Heart left ventricle (tissue), 16 donors: ENCODE measurements at regions of chr12 and their contacts with region 1.

Region 1: GRCh38 chr12:116703214-116703795 is 34.6 kb downstream of the SPRING1 start:
- DNase-seq: peak; percentile 54 to 74 (median 66)
- ATAC-seq: peak; percentile 67 to 83 (median 76)
- H3K4me3 ChIP-seq: no peak overlapping the region
- H3K27ac ChIP-seq: no peak overlapping the region
- H3K4me1 ChIP-seq: peaks cover 0 to 6% (median 0%) of the 10 kb centered on the region in 12 donors
- H3K27me3 ChIP-seq: no peaks in the 10 kb centered on the region
- CTCF ChIP-seq: peak; percentile 89 to 97 (median 93)
- POLR2A ChIP-seq: no peak

Region 2: GRCh38 chr12:114762490-114763110 is 1940.7 kb before region 1 on chr12:
- intact Hi-C with region 1: no loop called
- DNase-seq: peak in 4 of 5 donors; percentile 7 to 47 (median 36)
- ATAC-seq: peak; percentile 64 to 94 (median 83)
- H3K4me3 ChIP-seq: peak overlapping the region in 1 of 12 donors; percentile 18
- H3K27ac ChIP-seq: peak overlapping the region in 3 of 12 donors; percentile 0 to 56 (median 46)
- H3K4me1 ChIP-seq: peaks cover 0 to 12% (median 0%) of the 10 kb centered on the region in 12 donors
- H3K27me3 ChIP-seq: no peaks in the 10 kb centered on the region
- CTCF ChIP-seq: no peak
- POLR2A ChIP-seq: no peak

Region 3: DNA sequence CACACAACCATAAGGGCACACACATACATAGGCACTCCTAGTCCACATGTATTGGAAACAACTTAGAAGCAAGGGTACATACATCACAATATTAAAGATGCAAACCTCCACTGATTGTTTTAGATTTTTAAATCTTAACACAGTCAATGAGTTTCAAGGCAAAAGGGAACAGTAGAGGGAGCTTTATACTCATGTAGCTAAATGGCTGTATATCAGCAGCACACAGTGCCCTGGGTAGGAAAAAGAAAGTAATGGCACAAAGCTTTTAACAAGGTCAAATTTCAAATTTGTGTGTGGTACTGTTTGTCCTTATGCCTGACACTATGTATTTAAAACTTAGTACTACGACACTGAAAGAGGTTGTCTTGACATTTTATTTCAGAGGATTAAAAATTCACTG is 687.8 kb before region 1 on chr12:
- intact Hi-C with region 1: loop called in 3 of 10 experiments (anchors 10 kb)
- DNase-seq: no peak
- ATAC-seq: peak; percentile 62 to 86 (median 78)
- H3K4me3 ChIP-seq: no peak overlapping the region
- H3K27ac ChIP-seq: no peak overlapping the region
- H3K4me1 ChIP-seq: peaks cover 0 to 16% (median 10%) of the 10 kb centered on the region in 12 donors
- H3K27me3 ChIP-seq: no peaks in the 10 kb centered on the region
- CTCF ChIP-seq: peak; percentile 20 to 78 (median 58)
- POLR2A ChIP-seq: no peak

Region 4: GRCh38 chr12:116880817-116881324 is 177.6 kb after region 1 on chr12:
- intact Hi-C with region 1: loop called (anchors 2 to 10 kb)
- DNase-seq: peak in 3 of 5 donors; percentile 23 to 55 (median 28)
- ATAC-seq: peak in 3 of 4 donors; percentile 66 to 90 (median 85)
- H3K4me3 ChIP-seq: peak overlapping the region in 10 of 12 donors; percentile 31 to 60 (median 46)
- H3K27ac ChIP-seq: no peak overlapping the region
- H3K4me1 ChIP-seq: peaks cover 3 to 41% (median 27%) of the 10 kb centered on the region in 12 donors
- H3K27me3 ChIP-seq: peaks cover 13 to 81% (median 33%) of the 10 kb centered on the region in 9 donors
- CTCF ChIP-seq: peak in 2 of 12 donors; percentile 4 to 26
- POLR2A ChIP-seq: no peak

Region 5: DNA sequence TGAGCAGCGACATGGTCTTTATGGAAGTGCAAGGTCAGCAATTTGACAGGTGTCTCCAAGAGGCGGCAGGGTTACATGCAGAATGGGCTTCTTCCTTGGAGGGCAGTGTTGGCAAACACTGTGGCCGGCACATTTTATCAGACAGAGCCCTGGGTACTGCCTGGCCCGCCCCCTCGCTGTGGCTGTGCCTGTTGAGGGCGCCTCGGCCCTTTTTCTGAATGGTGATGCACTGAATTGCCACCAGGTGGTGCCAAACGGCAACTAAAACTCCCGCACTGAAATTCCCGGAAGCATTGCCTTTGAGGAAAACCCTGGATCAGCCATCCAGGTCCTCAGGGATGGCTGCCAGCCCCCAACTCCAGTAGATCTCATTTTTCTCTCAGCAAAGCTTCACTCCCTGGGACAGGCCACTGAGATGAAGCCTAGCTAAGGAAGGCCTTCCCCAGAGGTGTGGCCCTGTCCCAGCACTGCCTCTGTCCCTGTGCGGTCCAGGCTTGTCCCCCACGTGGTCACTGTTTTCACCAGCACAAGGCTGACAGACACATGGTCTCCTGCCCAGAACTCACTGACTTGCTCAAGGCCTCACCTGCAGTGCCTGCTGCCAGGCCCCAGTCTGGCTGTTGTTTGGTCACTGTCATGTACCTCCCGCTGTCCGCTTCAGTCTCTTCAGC is 322.3 kb after region 1 on chr12:
- intact Hi-C with region 1: loop called in 2 of 10 experiments (anchors 10 kb)
- DNase-seq: peak in 4 of 5 donors; percentile 68 to 73 (median 70)
- ATAC-seq: peak; percentile 84 to 94 (median 88)
- H3K4me3 ChIP-seq: no peak overlapping the region
- H3K27ac ChIP-seq: peak overlapping the region in 9 of 12 donors; percentile 20 to 65 (median 52)
- H3K4me1 ChIP-seq: peaks cover 0 to 26% (median 9%) of the 10 kb centered on the region in 12 donors
- H3K27me3 ChIP-seq: no peaks in the 10 kb centered on the region
- CTCF ChIP-seq: peak; percentile 89 to 98 (median 94)
- POLR2A ChIP-seq: no peak

Region 6: DNA sequence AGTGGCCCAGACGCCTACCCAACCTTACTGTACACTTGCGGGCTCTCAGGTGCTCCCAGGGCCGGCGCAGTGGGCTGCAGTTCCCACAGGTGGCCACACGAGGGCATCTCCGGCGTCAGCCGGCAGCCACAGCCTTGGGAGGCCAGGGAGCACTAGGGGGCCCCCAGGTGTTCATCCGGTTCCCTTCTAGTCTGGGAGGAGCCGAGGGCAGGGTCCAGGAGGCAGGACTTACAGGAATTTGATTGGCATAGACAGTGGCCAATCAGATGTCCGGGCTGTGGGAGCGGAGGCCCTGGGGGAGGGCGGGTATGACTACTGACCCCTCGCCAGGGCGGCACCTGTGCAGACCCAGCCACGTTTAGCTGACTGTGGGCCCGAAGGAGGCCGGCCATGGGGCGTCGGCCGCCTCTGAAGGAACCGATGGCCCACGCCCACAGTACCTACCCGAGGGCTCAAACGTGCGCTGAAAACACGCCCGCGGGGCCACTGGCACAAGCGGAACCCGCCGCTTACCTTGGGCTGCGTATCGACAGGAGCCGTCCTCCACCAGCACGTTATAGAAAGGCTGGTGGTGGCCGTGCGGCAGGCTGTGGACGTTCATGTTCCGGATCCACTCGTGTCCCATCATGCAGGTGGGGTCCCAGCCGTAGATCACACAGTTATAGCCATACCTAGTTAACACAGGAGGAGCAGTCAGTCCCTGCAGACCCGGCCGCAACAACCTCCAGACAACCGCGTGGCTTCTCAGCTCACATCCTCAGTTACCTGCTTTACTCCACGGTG is 452.2 kb after region 1 on chr12:
- intact Hi-C with region 1: loop called in 4 of 10 experiments (anchors 5 to 10 kb)
- DNase-seq: peak; percentile 34 to 68 (median 55)
- ATAC-seq: peak; percentile 34 to 76 (median 64)
- H3K4me3 ChIP-seq: no peak overlapping the region
- H3K27ac ChIP-seq: no peak overlapping the region
- H3K4me1 ChIP-seq: peaks cover 0 to 13% (median 0%) of the 10 kb centered on the region in 12 donors
- H3K27me3 ChIP-seq: no peaks in the 10 kb centered on the region
- CTCF ChIP-seq: peak; percentile 57 to 83 (median 70)
- POLR2A ChIP-seq: no peak